Transverse colon (tissue), 4 donors: ENCODE measurements at regions of chr6 and their contacts with region 1.

Region 1: GRCh38 chr6:4577406-4577805 is 198.8 kb upstream of the CDYL start:
- DNase-seq: no peak
- H3K4me3 ChIP-seq: no peak overlapping the region
- H3K27ac ChIP-seq: peak overlapping the region; percentile 35 to 49 (median 42)
- H3K4me1 ChIP-seq: peaks cover 0 to 7% (median 0%) of the 10 kb centered on the region in 4 donors
- H3K27me3 ChIP-seq: no peaks in the 10 kb centered on the region
- CTCF ChIP-seq: no peak
- EP300 ChIP-seq: no peak
- POLR2A ChIP-seq: no peak

Region 2: DNA sequence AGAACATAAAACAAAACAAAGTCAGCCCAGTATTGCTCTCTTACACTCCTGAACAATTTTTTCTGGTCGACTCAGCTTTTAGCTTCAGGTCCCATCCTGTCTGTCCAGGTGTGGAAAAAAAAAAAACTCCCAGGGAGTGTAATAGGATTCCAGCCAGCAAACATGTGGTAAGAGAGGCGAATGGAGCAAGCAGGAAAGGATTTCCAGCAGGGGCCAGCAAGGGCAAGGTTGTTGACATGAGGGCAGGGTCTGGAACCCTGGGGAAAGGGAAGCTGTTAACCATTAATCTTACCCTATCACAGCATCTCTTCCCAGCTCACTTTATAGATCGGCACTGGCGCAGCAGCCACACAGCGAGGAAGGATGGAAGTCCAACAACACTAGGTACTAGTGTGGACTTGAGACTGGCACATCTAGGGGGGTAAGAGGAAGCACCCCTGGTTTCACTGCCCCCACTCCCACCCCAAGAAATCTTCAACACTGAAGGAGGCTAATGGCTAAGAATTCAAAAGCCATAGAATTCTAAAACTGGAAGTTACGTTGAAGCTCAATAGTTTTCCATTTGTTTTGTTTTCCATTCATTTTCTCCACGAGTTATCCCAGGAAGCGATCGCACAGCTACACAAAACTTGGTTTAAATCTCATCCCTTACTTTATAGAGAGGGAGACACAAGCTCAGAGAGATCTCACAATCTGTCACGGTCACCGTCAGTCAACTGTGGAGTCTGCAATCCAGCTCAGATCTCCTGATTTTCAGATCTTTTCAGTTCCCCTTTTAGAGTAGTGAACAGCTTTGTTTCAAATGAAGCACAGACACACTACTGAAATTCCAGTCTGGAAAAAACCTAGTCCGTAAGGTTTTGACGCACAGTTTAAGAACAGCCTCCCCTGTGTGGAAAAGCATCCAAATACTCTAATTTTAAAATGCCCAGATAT is 1173.9 kb before region 1 on chr6:
- in situ Hi-C with region 1: no loop called
- intact Hi-C with region 1: loop called (anchors 5 kb)
- DNase-seq: peak; percentile 83
- H3K4me3 ChIP-seq: no peak overlapping the region
- H3K27ac ChIP-seq: peak overlapping the region; percentile 73 to 85 (median 84)
- H3K4me1 ChIP-seq: peaks cover 35 to 90% (median 76%) of the 10 kb centered on the region in 4 donors
- H3K27me3 ChIP-seq: no peaks in the 10 kb centered on the region
- CTCF ChIP-seq: no peak
- EP300 ChIP-seq: no peak
- POLR2A ChIP-seq: peak; percentile 46

Region 3: GRCh38 chr6:4698901-4699659 is 121.7 kb after region 1 on chr6:
- in situ Hi-C with region 1: no loop called
- intact Hi-C with region 1: no loop called
- DNase-seq: no peak
- H3K4me3 ChIP-seq: no peak overlapping the region
- H3K27ac ChIP-seq: no peak overlapping the region
- H3K4me1 ChIP-seq: no peaks in the 10 kb centered on the region
- H3K27me3 ChIP-seq: no peaks in the 10 kb centered on the region
- CTCF ChIP-seq: no peak
- EP300 ChIP-seq: no peak
- POLR2A ChIP-seq: no peak

Region 4: DNA sequence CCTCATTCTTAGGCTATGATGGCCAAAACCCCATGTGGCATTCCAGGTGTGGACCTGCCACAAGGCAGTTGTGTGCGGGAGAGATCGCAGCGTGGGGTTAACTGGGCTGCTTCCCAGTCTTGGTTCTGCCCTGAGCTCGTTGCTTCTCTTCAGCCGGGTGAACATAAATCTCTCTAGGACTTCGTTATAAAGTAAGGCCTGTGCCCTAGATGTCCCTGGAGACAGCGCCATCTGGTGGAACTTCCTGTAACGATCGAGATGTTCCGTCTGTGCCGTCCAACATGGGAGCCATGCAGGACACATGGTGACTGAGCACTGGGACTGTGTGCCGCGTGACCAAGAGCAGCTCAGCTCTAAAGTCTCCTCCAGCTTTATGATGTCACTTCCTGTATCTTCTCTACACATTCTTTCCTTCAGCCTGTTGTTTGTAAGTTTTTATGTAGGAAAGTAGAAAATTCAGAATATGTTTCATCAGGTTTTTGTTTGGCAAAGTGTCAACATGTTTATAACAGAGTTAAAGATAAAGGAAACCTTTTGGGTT is 453.3 kb after region 1 on chr6:
- in situ Hi-C with region 1: no loop called
- intact Hi-C with region 1: no loop called
- DNase-seq: peak; percentile 85
- H3K4me3 ChIP-seq: no peak overlapping the region
- H3K27ac ChIP-seq: no peak overlapping the region
- H3K4me1 ChIP-seq: peaks cover 0 to 16% (median 13%) of the 10 kb centered on the region in 4 donors
- H3K27me3 ChIP-seq: no peaks in the 10 kb centered on the region
- CTCF ChIP-seq: peak; percentile 60 to 70 (median 63)
- EP300 ChIP-seq: no peak
- POLR2A ChIP-seq: no peak